Ovary (tissue), 10 donors: ENCODE measurements at regions of chr7 and their contacts with region 1.

Region 1: GRCh38 chr7:140326116-140326928 is 72.0 kb downstream of the SLC37A3 start:
- DNase-seq: peak; percentile 63 to 74 (median 71)
- H3K4me3 ChIP-seq: no peak overlapping the region
- H3K27ac ChIP-seq: no peak overlapping the region
- H3K4me1 ChIP-seq: no peaks in the 10 kb centered on the region
- H3K27me3 ChIP-seq: no peaks in the 10 kb centered on the region
- CTCF ChIP-seq: peak; percentile 25 to 44 (median 38)
- EP300 ChIP-seq: no peak
- POLR2A ChIP-seq: no peak

Region 2: GRCh38 chr7:140273417-140273816 is 52.9 kb before region 1 on chr7:
- intact Hi-C with region 1: loop called in 1 of 4 experiments (anchors 5 kb)
- DNase-seq: no peak
- H3K4me3 ChIP-seq: no peak overlapping the region
- H3K27ac ChIP-seq: no peak overlapping the region
- H3K4me1 ChIP-seq: peaks cover 2% of the 10 kb centered on the region
- H3K27me3 ChIP-seq: no peaks in the 10 kb centered on the region
- CTCF ChIP-seq: no peak
- EP300 ChIP-seq: no peak
- POLR2A ChIP-seq: no peak